AG04450 (cell line): ENCODE measurements at regions of chr14 and their contacts with region 1.

Region 1: DNA sequence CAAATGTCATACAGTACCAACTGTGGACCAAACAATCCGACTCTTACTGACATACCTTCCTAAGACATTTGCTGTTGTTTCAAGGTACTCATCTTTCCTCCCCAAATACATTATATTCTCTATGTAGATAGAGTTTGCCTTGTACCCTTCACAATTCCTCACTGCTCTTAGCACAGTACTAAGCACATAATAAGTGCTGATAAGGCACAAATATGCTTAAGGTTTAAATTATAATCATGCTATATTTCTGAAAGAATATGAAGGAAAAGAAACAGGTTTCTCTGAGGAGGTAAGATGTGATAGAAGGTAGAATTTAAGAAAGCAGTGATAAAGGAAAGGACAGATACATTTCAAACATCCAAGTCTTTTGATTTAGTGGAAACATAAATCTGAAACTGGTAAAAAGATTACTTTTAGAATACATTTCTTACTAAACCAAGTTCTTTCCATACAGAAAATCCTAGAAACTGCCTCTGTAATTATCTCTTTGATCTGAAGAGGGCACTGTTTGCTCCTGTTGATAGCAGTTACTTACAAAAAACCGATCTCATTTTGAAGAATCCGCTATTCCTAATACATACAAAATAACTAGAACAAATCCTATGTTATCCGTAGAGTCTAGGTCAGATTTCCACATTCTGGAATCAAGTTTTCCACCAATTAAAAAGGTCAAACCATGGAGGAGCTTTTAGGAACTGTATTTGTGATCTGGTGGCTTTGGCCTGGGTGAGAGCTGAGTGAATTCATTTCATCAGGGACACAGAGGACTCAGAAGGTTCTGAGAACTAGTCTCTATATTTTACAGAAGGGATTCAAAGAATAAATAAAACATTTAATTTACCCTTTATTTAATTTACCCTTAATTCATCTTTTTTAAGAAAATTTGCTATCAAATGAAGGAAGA is 311.9 kb downstream of the DAD1 start:
- DNase-seq: no peak
- H3K4me3 ChIP-seq: no peak overlapping the region
- H3K27ac ChIP-seq: no peak overlapping the region
- H3K27me3 ChIP-seq: peaks cover 5% of the 10 kb centered on the region
- CTCF ChIP-seq: peak; percentile 71

Region 2: DNA sequence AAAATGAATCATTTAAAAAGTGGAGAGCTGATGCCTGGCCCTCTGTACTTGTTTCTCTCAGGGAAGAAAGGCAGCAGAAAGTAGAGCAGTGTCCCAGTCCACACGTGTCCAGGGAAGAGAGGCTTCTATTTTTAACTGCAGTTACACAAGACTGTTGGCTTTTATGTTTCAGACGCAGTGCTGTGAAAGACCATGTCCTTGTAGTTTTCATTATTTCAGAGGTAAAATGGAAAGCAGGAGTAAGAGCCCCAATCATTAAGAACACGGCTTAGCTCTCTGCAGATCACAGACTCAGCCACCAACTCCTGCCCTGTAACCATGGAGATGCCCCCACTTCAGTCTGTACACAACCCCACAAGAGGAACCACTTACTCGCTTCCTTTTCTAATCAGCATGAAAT is 24.5 kb before region 1 on chr14:
- CTCF ChIA-PET with region 1: interaction called, 15 read pairs
- POLR2A ChIA-PET with region 1: no interaction called
- DNase-seq: no peak
- H3K4me3 ChIP-seq: no peak overlapping the region
- H3K27ac ChIP-seq: no peak overlapping the region
- H3K27me3 ChIP-seq: no peaks in the 10 kb centered on the region
- CTCF ChIP-seq: no peak

Region 3: DNA sequence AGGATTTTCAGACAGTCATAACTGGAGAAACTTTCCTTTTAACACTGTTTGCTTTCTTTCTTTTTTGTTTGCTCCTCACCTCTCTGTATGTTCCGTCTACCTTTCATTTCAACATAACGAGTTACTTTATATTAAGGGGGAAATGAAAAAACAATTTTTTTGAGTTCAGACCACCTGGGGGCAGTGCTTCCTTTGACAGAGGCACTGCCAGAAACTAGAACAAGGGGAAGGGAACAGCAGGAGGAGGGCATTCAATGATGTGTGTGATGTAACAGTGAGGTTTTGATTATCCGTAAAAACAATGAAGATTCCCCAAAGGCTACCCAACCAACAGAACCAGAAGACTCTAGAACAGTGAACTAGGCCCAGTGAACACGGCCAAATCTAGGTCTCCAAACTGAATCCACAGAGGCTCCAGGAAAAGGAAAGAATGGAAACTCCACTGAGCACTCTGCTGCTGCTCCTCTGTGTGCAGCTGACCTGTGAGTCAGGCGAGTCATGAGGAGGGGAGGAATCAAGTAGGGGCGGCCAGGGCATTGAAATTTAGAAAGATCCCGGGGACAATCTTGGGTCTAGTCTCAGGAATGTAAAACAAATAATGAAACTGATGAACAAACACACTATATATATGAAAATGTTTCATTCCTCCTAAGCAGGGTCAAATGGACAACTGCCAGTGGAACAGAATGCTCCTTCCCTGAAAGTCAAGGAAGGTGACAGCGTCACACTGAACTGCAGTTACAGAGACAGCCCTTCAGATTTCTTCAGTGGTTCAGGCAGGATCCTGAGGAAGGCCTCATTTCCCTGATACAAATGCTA is 11.6 kb before region 1 on chr14:
- CTCF ChIA-PET with region 1: interaction called, 25 read pairs
- POLR2A ChIA-PET with region 1: no interaction called
- DNase-seq: no peak
- H3K4me3 ChIP-seq: no peak overlapping the region
- H3K27ac ChIP-seq: peak overlapping the region; percentile 59
- H3K27me3 ChIP-seq: no peaks in the 10 kb centered on the region
- CTCF ChIP-seq: peak; percentile 51